Posterior cingulate gyrus (tissue), 11 donors: ENCODE measurements at regions of chr3 and their contacts with region 1.

Region 1: DNA sequence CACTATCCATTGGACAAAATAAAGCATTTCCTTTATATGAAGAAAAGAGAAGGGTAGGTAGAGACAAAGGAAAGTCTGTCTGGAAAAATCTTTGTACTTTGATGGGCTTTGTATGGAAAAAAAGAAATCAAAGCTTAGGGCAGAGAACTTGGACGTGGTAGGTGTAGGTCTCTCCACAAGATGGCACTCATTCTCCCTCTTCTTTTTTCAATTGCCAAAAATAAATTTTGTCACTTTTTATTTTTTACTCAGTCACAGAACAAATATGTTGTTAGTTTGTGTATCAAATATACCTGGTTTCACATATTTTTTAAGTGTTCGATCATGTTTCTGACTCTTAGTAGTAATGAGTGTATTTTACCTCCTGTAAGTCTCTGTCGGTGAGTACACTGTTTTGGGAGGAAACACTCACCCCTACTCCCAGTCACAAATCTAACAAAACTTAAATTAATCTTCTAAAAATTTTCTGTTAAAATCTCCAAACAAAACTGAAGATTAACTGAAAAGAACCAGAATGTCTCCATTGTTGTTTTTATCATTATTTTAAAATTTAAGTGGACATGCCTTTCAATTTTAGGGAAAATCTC is 415.8 kb upstream of the GOLIM4 start:
- DNase-seq: no peak

Region 2: DNA sequence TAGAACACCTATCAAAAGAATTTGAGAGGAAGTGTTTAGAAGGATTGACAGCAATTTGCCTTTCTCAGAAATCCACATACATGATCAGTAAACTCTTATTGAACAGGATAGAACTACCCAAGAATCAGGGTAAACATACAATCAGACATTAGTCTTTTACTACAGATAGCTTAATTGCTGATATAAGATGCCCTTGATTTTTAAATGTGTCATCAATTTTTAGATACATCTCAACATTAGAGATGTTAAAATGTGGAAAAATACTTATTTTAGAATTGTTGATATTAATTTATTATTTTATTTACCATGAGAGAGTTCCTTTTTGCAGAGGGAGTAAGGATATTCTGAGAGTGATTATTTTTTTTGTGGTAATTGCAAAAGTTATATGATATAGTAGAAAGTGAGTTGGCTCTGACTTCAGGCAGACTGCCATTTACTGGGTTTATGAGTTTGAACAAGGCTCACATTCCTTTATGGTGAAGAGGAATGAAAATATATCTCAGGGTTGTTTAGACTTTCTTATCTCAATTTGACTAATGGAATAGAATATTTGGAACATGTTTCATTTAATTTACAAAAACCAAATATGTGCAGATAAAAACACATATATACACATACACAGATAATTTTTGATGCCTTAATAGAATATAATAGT is 113.0 kb before region 1 on chr3:
- intact Hi-C with region 1: no loop called
- DNase-seq: no peak

Region 3: GRCh38 chr3:168620826-168621225 is 109.3 kb after region 1 on chr3:
- intact Hi-C with region 1: loop called (anchors 2 kb)
- DNase-seq: peak in 7 of 10 donors; percentile 17 to 88 (median 49)

Region 4: GRCh38 chr3:168847291-168847883 is 335.9 kb after region 1 on chr3:
- intact Hi-C with region 1: loop called (anchors 2 kb)
- DNase-seq: peak in 2 of 10 donors; percentile 8 to 10